ENCODE measurements at regions of chr22 and their contacts with region 1.

Region 1: GRCh38 chr22:41940832-41941765 is 5.9 kb downstream of the CENPM start:
- DNase-seq: peak; percentile 81
- H3K4me3 Mint-ChIP-seq: peak overlapping the region; percentile 87
- H3K27ac Mint-ChIP-seq: peak overlapping the region; percentile 100
- H3K4me1 Mint-ChIP-seq: peaks cover 46% of the 10 kb centered on the region
- H3K27me3 Mint-ChIP-seq: no peaks in the 10 kb centered on the region

Region 2: GRCh38 chr22:41448189-41448808 is 492.8 kb before region 1 on chr22:
- intact Hi-C with region 1: loop called (anchors 2 kb)
- DNase-seq: peak; percentile 91
- H3K4me3 Mint-ChIP-seq: peak overlapping the region; percentile 96
- H3K27ac Mint-ChIP-seq: peak overlapping the region; percentile 98
- H3K4me1 Mint-ChIP-seq: peaks cover 6% of the 10 kb centered on the region
- H3K27me3 Mint-ChIP-seq: no peaks in the 10 kb centered on the region

Region 3: GRCh38 chr22:41697126-41697775 is 243.8 kb before region 1 on chr22:
- intact Hi-C with region 1: loop called (anchors 1 kb)
- DNase-seq: peak; percentile 81
- H3K4me3 Mint-ChIP-seq: no peak overlapping the region
- H3K27ac Mint-ChIP-seq: peak overlapping the region; percentile 69
- H3K4me1 Mint-ChIP-seq: peaks cover 11% of the 10 kb centered on the region
- H3K27me3 Mint-ChIP-seq: peaks cover 2% of the 10 kb centered on the region

Region 4: GRCh38 chr22:41800348-41801146 is 140.6 kb before region 1 on chr22 and contains the start of gene CCDC134:
- intact Hi-C with region 1: loop called (anchors 2 kb)
- DNase-seq: peak; percentile 90
- H3K4me3 Mint-ChIP-seq: peak within 1 kb of the TSS; percentile 93
- H3K27ac Mint-ChIP-seq: peak within 1 kb of the TSS; percentile 97
- H3K4me1 Mint-ChIP-seq: peaks cover 33% of the 10 kb centered on the region
- H3K27me3 Mint-ChIP-seq: no peaks in the 10 kb centered on the region
- total RNA-seq, gene CCDC134: 17.4 and 19.6 TPM in 2 replicates

Region 5: DNA sequence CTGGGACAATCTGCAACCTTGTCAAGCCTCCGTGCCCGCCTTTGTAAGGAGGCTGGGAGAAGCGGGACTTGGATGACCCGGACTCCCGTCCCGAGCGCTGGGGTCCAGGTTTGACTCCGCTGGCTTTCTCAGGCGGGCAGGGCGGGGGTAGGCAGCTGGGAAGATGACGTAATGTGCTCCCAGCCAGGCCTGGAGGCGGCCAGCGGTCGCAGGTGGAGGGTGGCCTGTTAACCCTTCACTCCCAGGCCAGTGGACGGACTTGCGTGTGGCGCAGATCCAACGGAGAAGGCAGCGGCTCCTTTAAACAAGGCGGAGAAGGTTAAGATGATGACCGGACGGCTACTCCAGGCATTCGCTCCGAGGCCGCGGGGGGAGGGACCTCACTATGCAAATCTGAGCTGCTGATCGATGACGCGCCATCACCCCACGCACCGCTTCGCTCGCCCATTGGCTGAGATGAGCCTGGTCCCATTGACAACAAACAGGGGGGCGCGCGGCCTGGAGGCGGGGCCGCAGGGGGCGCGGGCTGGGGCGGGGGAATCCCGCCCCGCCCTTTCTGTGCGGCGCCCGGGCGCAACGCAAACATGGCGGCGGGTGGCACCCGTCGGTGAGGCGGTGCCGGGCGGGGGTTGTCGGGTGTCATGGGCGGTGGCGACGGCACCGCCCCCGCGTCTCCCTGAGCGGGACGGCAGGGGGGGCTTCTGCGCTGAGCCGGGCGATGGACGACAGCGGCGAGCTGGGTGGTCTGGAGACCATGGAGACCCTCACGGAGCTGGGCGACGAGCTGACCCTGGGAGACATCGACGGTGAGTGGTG is 108.3 kb before region 1 on chr22 and contains the start of gene SREBF2:
- intact Hi-C with region 1: loop called (anchors 2 kb)
- DNase-seq: peak; percentile 99
- H3K4me3 Mint-ChIP-seq: peak within 1 kb of the TSS; percentile 99
- H3K27ac Mint-ChIP-seq: peak within 1 kb of the TSS; percentile 97
- H3K4me1 Mint-ChIP-seq: peaks cover 46% of the 10 kb centered on the region
- H3K27me3 Mint-ChIP-seq: no peaks in the 10 kb centered on the region
- total RNA-seq, gene SREBF2: 191 and 202 TPM in 2 replicates

Region 6: DNA sequence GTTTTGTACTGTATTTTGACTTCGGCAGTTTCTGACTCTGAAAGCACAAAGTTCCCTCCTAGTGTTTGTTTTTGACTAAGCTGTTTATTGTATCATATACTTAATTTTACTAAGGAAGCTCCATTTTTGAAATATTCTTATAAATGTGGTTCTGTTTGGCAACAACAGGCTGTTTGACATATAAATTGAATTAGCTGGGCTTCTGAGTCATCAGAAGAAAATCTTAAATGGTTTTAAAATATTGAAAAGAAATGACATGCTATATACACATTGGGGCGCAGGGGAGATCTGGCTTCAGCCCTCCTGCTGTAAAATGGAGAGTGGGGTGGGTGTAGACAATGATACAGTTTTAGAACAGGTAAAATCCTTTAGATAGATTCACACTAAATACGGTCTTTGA is 64.8 kb before region 1 on chr22:
- intact Hi-C with region 1: no loop called
- DNase-seq: no peak
- H3K4me3 Mint-ChIP-seq: no peak overlapping the region
- H3K27ac Mint-ChIP-seq: peak overlapping the region; percentile 34
- H3K4me1 Mint-ChIP-seq: peaks cover 18% of the 10 kb centered on the region
- H3K27me3 Mint-ChIP-seq: no peaks in the 10 kb centered on the region

Region 7: GRCh38 chr22:41925655-41926460 is 15.2 kb before region 1 on chr22:
- intact Hi-C with region 1: loop called (anchors 2 kb)
- DNase-seq: peak; percentile 68
- H3K4me3 Mint-ChIP-seq: peak overlapping the region; percentile 67
- H3K27ac Mint-ChIP-seq: no peak overlapping the region
- H3K4me1 Mint-ChIP-seq: peaks cover 11% of the 10 kb centered on the region
- H3K27me3 Mint-ChIP-seq: peaks cover 20% of the 10 kb centered on the region

Measured in activated T-helper 2 cell treated with anti-CD3 and anti-CD28 coated beads, Interferon-gamma antibody, Interleukin-2, Interleukin-4, amounts not matched to agents 10 μg/mL and 5 μg/mL and 100 μg/mL, durations not matched to agents 14 hours and 24 hours and 36 hours (primary cell).